HepG2 (cell line): ENCODE measurements at regions of chr12 and their contacts with region 1.

Region 1: DNA sequence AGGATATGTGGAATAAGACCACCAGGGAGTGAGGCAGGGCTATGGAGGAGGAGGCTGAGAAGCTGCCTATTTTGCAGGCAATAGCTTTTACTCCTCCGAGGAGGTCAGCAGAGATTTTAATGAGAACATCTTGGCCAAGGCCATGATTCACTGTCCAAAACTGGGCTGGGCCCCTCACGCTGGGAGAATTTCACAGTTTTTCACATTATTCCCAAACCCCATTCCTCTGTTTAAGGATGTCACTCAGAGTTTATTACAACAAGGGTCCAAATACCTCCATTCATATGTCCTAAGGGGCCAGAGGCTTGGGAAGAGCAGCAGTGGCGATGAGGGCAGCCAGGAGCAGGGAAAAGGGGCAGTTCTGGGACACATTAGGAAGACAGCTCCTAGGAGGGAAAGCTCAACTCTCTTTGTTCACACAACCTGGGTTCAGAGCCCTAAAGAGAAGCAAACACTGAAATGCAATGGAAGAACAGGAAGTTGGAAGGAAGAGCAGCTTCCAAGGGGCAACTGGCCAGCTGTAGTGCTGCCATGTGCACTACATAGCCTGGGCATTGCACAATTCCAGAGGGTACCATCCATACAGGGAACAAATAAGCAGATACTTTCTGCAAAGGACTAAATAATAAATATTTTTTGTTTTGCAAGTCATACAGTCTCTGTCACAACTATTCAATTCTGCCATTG is 283.2 kb downstream of the NUAK1 start:
- DNase-seq: no peak
- ATAC-seq: no peak
- H3K4me3 ChIP-seq: no peak overlapping the region
- H3K27ac ChIP-seq: no peak overlapping the region
- H3K4me1 ChIP-seq: no peaks in the 10 kb centered on the region
- H3K27me3 ChIP-seq: no peaks in the 10 kb centered on the region
- CTCF ChIP-seq: no peak
- EP300 ChIP-seq: no peak
- POLR2A ChIP-seq: no peak
- RAD21 ChIP-seq: no peak

Region 2: GRCh38 chr12:105820429-105821140 is 34.9 kb before region 1 on chr12:
- CTCF ChIA-PET with region 1: no interaction called
- POLR2A ChIA-PET with region 1: no interaction called
- in situ Hi-C with region 1: no loop called
- intact Hi-C with region 1: no loop called
- DNase-seq: peak; percentile 40
- ATAC-seq: no peak
- H3K4me3 ChIP-seq: no peak overlapping the region
- H3K27ac ChIP-seq: no peak overlapping the region
- H3K4me1 ChIP-seq: no peaks in the 10 kb centered on the region
- H3K27me3 ChIP-seq: no peaks in the 10 kb centered on the region; a peak in 1 of 5 replicates
- CTCF ChIP-seq: no peak
- EP300 ChIP-seq: no peak
- POLR2A ChIP-seq: no peak
- RAD21 ChIP-seq: no peak

Region 3: GRCh38 chr12:105927564-105927963 is 72.1 kb after region 1 on chr12:
- CTCF ChIA-PET with region 1: no interaction called
- POLR2A ChIA-PET with region 1: no interaction called
- in situ Hi-C with region 1: no loop called
- intact Hi-C with region 1: loop called (anchors 2 kb)
- DNase-seq: no peak
- ATAC-seq: no peak
- H3K4me3 ChIP-seq: no peak overlapping the region
- H3K27ac ChIP-seq: no peak overlapping the region
- H3K4me1 ChIP-seq: no peaks in the 10 kb centered on the region
- H3K27me3 ChIP-seq: no peaks in the 10 kb centered on the region
- CTCF ChIP-seq: no peak
- EP300 ChIP-seq: no peak
- POLR2A ChIP-seq: no peak
- RAD21 ChIP-seq: no peak